ENCODE measurements at regions of chr10 and their contacts with region 1.

Region 1: DNA sequence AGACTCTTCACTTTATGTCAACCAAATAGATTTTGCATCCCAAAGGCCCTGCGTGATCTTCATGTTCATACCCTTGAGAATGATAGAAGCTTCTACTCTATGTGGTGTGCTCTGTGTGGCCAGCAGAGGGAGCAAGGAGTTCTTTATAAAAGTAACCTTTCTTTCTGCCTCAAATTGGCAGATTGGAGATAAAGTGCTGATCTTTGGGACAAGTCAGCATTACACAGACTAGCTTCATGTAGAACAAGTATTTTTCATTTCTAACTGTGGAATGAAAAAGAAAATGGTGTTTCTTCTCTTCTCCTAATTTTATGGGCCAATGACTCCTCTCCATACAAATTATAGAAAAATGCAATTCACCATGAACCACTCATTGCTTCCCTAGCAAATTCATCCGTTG is 1214.1 kb downstream of the SORCS1 start:
- DNase-seq: peak; percentile 39
- CTCF ChIP-seq: peak; percentile 79

Region 2: DNA sequence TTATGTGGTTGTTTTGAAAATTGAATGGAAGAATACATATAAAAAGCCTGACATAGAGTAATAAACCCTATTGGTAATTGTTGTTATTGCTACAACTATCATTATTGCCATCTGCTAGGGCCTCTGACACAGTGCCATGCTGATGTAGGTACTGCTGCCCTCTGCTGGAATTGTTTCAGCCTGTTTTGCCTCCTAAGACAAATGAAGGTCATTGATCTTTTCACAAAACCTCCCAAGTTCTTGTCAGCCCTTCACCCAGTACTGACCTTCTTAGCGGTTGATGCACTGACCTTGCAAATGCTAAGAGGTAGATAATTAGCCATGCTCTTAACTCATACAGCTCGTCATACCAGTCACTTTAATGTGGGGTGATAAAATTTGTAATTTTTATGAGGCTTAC is 238.9 kb after region 1 on chr10:
- in situ Hi-C with region 1: loop called (anchors 25 kb)
- DNase-seq: peak; percentile 23
- CTCF ChIP-seq: peak; percentile 52